Activated CD4-positive, alpha-beta memory T cell treated with anti-CD3 and anti-CD28 coated beads, Interleukin-2, amount 10 ng/mL, durations not matched to agents 7 days and 5 days (primary cell): ENCODE measurements at regions of chr19 and their contacts with region 1.

Region 1: DNA sequence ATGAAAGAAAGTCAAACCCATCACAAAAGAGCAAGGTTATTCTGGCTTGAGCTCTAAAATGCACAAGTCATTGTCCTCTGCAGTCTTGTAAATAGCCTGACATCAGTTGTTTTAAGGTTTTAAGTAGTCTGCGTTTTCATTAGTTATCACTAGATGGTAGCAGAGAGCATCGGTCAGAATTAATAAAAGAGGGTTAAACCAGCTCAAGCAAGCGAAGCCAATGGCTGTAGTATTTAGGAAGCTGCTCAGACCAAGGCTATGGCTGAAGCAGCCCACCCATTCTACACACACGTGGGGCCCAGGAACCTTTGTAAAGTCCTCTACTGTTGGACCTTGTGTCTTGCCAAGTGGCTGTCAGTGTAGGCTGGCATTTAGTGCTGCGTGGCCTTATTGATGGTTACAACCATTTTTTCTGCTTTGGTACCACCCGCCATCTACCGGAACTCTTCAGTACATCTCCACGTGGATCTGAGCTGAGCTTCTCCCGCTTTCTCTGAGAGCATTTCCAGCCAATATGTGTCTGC is 13.3 kb upstream of the ZNF57 start:
- DNase-seq: no peak
- H3K4me3 Mint-ChIP-seq: no peak overlapping the region
- H3K27ac Mint-ChIP-seq: no peak overlapping the region
- H3K4me1 Mint-ChIP-seq: peaks cover 6% of the 10 kb centered on the region
- H3K27me3 Mint-ChIP-seq: no peaks in the 10 kb centered on the region

Region 2: GRCh38 chr19:2750808-2751443 is 136.5 kb before region 1 on chr19:
- CTCF ChIA-PET with region 1: no interaction called
- POLR2A ChIA-PET with region 1: no interaction called
- DNase-seq: no peak
- H3K4me3 Mint-ChIP-seq: no peak overlapping the region
- H3K27ac Mint-ChIP-seq: no peak overlapping the region
- H3K4me1 Mint-ChIP-seq: peaks cover 1% of the 10 kb centered on the region
- H3K27me3 Mint-ChIP-seq: no peaks in the 10 kb centered on the region

Region 3: DNA sequence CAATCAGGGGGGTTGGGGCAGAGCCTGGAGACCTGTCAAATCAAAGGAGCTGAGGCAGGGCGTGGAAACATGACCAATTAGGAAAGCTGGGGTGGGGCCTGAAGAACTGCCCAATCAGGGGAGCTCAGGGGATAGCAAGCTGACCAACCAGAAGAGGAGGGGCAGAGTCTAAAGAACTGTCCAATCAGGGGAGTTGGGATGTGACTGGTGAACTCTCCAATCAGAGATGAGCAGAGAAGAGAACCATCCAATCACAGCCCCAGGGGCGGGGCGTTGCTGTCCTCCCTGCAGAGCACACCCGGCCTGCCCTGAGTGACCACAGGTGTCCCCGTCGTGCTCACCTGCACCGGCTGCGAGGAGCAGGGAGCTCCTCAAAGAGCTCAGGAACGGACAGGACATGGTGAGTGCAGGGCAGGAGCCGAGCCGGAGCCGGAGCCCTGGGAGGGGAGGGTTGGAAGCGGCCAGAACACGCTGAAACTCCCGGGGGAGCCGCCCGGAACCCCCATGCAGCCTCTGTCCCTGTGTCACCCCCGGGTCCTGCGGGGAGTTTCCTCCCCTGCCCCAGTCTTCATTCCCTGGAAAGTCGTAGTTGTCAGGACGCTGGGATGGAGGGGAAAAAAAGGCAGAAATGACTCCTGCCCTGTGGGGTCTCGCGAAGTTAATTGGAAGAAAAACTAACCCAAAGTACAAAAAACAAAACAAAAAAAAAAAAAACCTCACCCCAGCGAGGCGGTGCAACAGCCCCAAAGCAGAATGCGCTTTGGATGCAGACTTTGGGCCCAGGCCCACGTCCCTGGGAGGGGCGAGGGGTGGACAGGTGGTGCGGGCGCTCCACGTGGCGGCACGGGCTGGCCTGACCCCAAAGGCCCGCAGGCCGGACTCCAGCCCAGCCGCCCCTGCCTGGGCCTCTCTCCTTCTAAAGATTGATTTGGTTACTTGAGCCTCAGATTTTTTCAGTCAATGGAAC is 20.1 kb before region 1 on chr19 and contains the start of gene ZNF556:
- CTCF ChIA-PET with region 1: no interaction called
- POLR2A ChIA-PET with region 1: no interaction called
- DNase-seq: no peak
- H3K4me3 Mint-ChIP-seq: no peak within 1 kb of the TSS
- H3K27ac Mint-ChIP-seq: no peak within 1 kb of the TSS
- H3K4me1 Mint-ChIP-seq: no peaks in the 10 kb centered on the region
- H3K27me3 Mint-ChIP-seq: no peaks in the 10 kb centered on the region
- total RNA-seq, gene ZNF556: not detected

Region 4: GRCh38 chr19:2900296-2901252 is 13.1 kb after region 1 on chr19 and contains the start of gene ZNF57:
- CTCF ChIA-PET with region 1: interaction called, 13 read pairs
- POLR2A ChIA-PET with region 1: interaction called, 3 read pairs
- DNase-seq: peak; percentile 97
- H3K4me3 Mint-ChIP-seq: peak within 1 kb of the TSS; percentile 99
- H3K27ac Mint-ChIP-seq: peak within 1 kb of the TSS; percentile 93
- H3K4me1 Mint-ChIP-seq: peaks cover 16% of the 10 kb centered on the region
- H3K27me3 Mint-ChIP-seq: no peaks in the 10 kb centered on the region
- total RNA-seq, gene ZNF57: 3.1 to 3.7 TPM

Region 5: GRCh38 chr19:3035542-3036118 is 148.2 kb after region 1 on chr19:
- CTCF ChIA-PET with region 1: no interaction called
- POLR2A ChIA-PET with region 1: no interaction called
- DNase-seq: peak; percentile 96
- H3K4me3 Mint-ChIP-seq: peak overlapping the region; percentile 83
- H3K27ac Mint-ChIP-seq: peak overlapping the region; percentile 91
- H3K4me1 Mint-ChIP-seq: peaks cover 23% of the 10 kb centered on the region
- H3K27me3 Mint-ChIP-seq: peaks cover 25% of the 10 kb centered on the region